ENCODE measurements at regions of chr10 and their contacts with region 1.

Region 1: GRCh38 chr10:29304264-29305030 is 15.6 kb downstream of the LYZL1 start:
- DNase-seq: peak; percentile 52
- ATAC-seq: peak; percentile 94

Region 2: GRCh38 chr10:28628184-28628893 is 676.1 kb before region 1 on chr10:
- intact Hi-C with region 1: loop called (anchors 10 kb)
- DNase-seq: peak; percentile 83
- ATAC-seq: peak; percentile 96

Region 3: GRCh38 chr10:29007748-29008610 is 296.5 kb before region 1 on chr10:
- intact Hi-C with region 1: loop called (anchors 10 kb)
- DNase-seq: peak; percentile 57
- ATAC-seq: peak; percentile 51

Region 4: GRCh38 chr10:29150003-29150402 is 154.4 kb before region 1 on chr10:
- intact Hi-C with region 1: loop called (anchors 10 kb)
- DNase-seq: peak; percentile 58
- ATAC-seq: peak; percentile 98

Region 5: DNA sequence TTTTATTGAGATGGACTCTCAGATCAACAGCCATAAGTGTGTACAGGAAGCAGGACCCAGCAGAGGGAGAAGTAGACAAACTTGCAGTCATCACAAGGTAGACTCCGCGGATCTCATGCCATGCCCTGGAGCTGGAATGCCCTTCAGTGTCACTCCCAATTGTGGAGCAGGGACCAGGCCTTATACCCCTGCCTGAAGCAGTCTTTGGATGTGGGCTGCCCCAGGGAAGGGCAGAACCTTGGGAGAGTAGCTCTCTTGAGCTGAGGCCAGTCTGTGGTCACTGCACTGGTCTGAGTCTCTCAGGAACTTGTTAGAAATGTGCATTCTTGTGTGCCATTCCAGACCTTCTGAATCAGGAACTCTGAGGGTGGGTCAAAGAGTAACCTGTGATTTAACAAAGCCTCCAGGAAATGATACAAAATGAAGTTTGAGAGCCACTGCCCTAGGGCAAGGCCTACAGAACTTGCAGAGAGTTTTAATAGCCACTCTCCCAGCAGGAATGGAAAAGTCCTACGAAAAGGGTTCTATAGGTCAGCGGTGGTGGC is 52.4 kb after region 1 on chr10:
- intact Hi-C with region 1: no loop called
- DNase-seq: no peak
- ATAC-seq: no peak

Region 6: GRCh38 chr10:29585488-29585980 is 281.1 kb after region 1 on chr10:
- intact Hi-C with region 1: no loop called
- DNase-seq: peak; percentile 57
- ATAC-seq: peak; percentile 9

Measured in Right ventricle myocardium superior (tissue), 1 donor.